Sciatic nerve (tissue), 2 donors: ENCODE measurements at regions of chr15 and their contacts with region 1.

Region 1: GRCh38 chr15:59993950-59994401 is 10.1 kb upstream of the FOXB1 start:
- DNase-seq: no peak
- ATAC-seq: no peak

Region 2: GRCh38 chr15:61130945-61131942 is 1137.3 kb after region 1 on chr15:
- intact Hi-C with region 1: loop called (anchors 5 kb)
- DNase-seq: no peak
- ATAC-seq: no peak